ENCODE measurements at regions of chr1 and their contacts with region 1.

Region 1: DNA sequence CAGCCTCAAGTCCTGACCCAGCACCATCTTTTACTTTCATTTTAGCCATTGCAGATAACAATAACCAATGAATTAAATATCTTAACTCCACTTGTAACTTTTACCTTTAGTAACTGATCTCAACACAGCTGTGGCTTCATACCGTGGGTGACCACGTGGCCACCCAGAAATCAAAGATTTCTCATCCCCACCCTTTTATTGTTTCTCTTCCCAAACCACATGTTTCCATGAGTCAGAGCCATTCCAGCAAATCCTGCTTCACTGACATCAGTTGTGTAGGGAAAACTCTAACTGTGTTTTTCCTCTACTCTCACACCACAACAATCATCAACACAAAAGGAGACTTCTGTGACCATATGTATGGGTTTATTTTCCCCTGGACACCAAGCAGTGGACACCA is 25.1 kb upstream of the BRDT start:
- DNase-seq: no peak
- ATAC-seq: no peak
- H3K4me3 ChIP-seq: no peak overlapping the region
- H3K27ac ChIP-seq: no peak overlapping the region
- H3K4me1 ChIP-seq: peaks cover 4% of the 10 kb centered on the region
- H3K27me3 ChIP-seq: no peaks in the 10 kb centered on the region
- CTCF ChIP-seq: no peak

Region 2: GRCh38 chr1:91282695-91283420 is 641.3 kb before region 1 on chr1:
- intact Hi-C with region 1: loop called (anchors 10 kb)
- DNase-seq: no peak
- ATAC-seq: peak; percentile 70 to 79
- H3K4me3 ChIP-seq: peak overlapping the region; percentile 10
- H3K27ac ChIP-seq: no peak overlapping the region
- H3K4me1 ChIP-seq: peaks cover 4% of the 10 kb centered on the region
- H3K27me3 ChIP-seq: no peaks in the 10 kb centered on the region
- CTCF ChIP-seq: peak; percentile 74

Region 3: GRCh38 chr1:91781371-91781825 is 142.7 kb before region 1 on chr1:
- intact Hi-C with region 1: no loop called
- DNase-seq: no peak
- ATAC-seq: no peak
- H3K4me3 ChIP-seq: no peak overlapping the region
- H3K27ac ChIP-seq: peak overlapping the region; percentile 8
- H3K4me1 ChIP-seq: peaks cover 51% of the 10 kb centered on the region
- H3K27me3 ChIP-seq: no peaks in the 10 kb centered on the region
- CTCF ChIP-seq: no peak

Region 4: GRCh38 chr1:91795591-91796389 is 128.4 kb before region 1 on chr1:
- intact Hi-C with region 1: no loop called
- DNase-seq: no peak
- ATAC-seq: no peak
- H3K4me3 ChIP-seq: no peak overlapping the region
- H3K27ac ChIP-seq: no peak overlapping the region
- H3K4me1 ChIP-seq: peaks cover 60% of the 10 kb centered on the region
- H3K27me3 ChIP-seq: no peaks in the 10 kb centered on the region
- CTCF ChIP-seq: no peak